Pancreas (tissue), 10 donors: ENCODE measurements at regions of chr4 and their contacts with region 1.

Region 1: GRCh38 chr4:73258686-73259570 is at the start of gene ANKRD17:
- DNase-seq: peak; percentile 91 to 96 (median 91)
- ATAC-seq: peak; percentile 84 to 94 (median 91)
- H3K4me3 ChIP-seq: peak within 1 kb of the TSS; percentile 84 to 90 (median 84)
- H3K27ac ChIP-seq: peak within 1 kb of the TSS; percentile 94 to 99 (median 98)
- H3K4me1 ChIP-seq: peaks cover 9 to 38% (median 19%) of the 10 kb centered on the region in 3 donors
- H3K27me3 ChIP-seq: no peaks in the 10 kb centered on the region
- CTCF ChIP-seq: peak in 2 of 4 donors; percentile 6 to 7
- total RNA-seq, gene ANKRD17: 29.0 to 45.8 (median 32.4) TPM

Region 2: DNA sequence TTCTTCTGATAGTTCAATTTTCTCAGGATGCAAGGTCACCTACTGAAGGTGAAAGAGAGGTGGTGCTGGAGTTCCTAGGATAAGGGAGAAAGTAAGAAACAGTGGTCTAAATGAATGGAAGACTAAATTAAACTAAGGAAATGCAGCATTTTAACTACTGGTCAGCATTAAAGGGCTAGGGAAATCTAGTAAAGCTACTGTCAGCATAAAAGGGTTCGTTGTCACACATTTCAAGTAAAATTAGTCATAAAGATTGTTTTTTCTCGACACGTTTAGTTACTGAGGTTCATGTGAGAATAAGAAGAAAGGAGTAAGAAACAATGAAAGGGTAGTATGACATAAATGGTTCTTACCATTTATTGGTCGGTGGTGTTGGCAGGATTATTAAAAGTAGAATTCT is 149.4 kb before region 1 on chr4:
- intact Hi-C with region 1: loop called in 1 of 3 experiments (anchors 10 kb)
- DNase-seq: no peak
- ATAC-seq: no peak
- H3K4me3 ChIP-seq: no peak overlapping the region
- H3K27ac ChIP-seq: no peak overlapping the region
- H3K4me1 ChIP-seq: no peaks in the 10 kb centered on the region
- H3K27me3 ChIP-seq: no peaks in the 10 kb centered on the region
- CTCF ChIP-seq: no peak

Region 3: DNA sequence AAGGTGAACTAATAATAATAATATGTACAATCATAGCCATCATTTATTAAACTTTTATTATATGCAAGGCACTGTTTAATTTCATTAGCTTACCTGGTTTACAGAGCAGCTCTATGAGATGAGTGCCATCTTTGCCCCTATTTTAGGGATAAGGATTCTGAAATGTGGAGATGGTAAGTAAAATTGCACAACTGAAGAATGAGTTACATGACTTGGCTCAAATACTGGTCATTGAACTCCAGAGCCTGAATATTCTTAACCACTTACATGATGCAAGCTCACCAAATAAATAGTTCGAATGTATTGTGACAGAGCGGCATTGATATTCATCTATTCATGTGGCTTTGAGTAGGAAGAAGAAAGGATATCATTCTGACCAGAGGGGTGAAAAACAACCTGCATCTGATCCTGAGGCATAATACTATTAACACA is 156.9 kb after region 1 on chr4:
- intact Hi-C with region 1: no loop called
- DNase-seq: no peak
- ATAC-seq: no peak
- H3K4me3 ChIP-seq: no peak overlapping the region
- H3K27ac ChIP-seq: no peak overlapping the region
- H3K4me1 ChIP-seq: no peaks in the 10 kb centered on the region
- H3K27me3 ChIP-seq: no peaks in the 10 kb centered on the region
- CTCF ChIP-seq: no peak